Activated CD4-positive, alpha-beta T cell treated with anti-CD3 and anti-CD28 coated beads, Interleukin-2, amount 10 ng/mL, durations not matched to agents 24 days and 14 days (primary cell): ENCODE measurements at regions of chr19 and their contacts with region 1.

Region 1: DNA sequence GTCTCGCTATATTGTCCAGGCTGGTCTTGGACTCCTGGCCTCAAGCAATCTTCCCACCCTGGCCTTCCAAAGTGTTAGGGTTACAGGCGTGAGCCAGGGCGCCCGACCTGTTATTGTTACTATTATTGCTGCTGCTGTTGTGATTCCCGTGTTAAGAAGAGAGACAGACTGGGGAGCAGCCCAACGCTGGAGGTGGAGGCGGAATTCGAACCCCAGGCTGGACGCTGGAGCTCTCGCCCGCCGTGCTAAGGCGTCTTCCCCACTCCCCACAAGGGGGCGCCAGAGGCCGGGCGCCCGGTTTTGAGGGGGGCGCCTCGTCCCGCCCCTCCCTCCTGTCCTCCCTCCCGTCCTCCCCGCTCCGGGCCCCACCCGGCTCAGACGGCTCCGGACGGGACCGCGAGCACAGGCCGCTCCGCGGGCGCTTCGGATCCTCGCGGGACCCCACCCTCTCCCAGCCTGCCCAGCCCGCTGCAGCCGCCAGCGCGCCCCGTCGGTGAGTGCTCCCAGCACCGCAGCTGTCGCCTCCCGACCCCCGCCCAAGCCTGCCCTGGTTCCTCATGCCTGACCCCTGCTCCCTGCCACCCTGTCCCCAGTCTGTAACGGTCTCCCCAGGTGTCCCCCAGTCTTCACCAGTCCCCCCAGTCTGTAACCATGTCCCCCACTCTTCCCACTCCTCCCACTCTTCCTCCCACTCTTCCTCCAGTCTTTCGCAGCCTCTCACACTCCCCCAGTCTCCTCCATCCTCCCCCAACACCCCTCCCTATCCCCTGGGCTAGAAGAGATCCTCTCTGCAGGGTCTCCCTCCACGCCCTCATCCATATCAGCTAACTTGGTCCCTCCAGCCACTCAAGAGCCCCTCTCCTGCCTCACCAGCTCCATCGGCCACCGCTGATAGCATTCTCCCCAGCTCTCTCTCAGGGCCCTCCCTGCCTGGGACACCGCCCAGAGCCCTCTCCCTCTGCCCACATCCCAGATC is at the start of gene EHD2:
- DNase-seq: peak; percentile 85
- H3K4me3 Mint-ChIP-seq: peak within 1 kb of the TSS; percentile 56
- H3K27ac Mint-ChIP-seq: peak within 1 kb of the TSS; percentile 8
- H3K4me1 Mint-ChIP-seq: peaks cover 2% of the 10 kb centered on the region
- H3K27me3 Mint-ChIP-seq: peaks cover 23% of the 10 kb centered on the region
- total RNA-seq, gene EHD2: 0.49 and 1.2 TPM in 2 replicates

Region 2: GRCh38 chr19:47742634-47743033 is 29.3 kb after region 1 on chr19:
- intact Hi-C with region 1: loop called (anchors 1 kb)
- DNase-seq: no peak
- H3K4me3 Mint-ChIP-seq: peak overlapping the region; percentile 91
- H3K27ac Mint-ChIP-seq: peak overlapping the region; percentile 94
- H3K4me1 Mint-ChIP-seq: peaks cover 20% of the 10 kb centered on the region
- H3K27me3 Mint-ChIP-seq: peaks cover 2% of the 10 kb centered on the region

Region 3: GRCh38 chr19:47790398-47790814 is 77.1 kb after region 1 on chr19:
- intact Hi-C with region 1: loop called (anchors 1 kb)
- DNase-seq: peak; percentile 94
- H3K4me3 Mint-ChIP-seq: no peak overlapping the region
- H3K27ac Mint-ChIP-seq: no peak overlapping the region
- H3K4me1 Mint-ChIP-seq: peaks cover 6% of the 10 kb centered on the region
- H3K27me3 Mint-ChIP-seq: no peaks in the 10 kb centered on the region

Region 4: DNA sequence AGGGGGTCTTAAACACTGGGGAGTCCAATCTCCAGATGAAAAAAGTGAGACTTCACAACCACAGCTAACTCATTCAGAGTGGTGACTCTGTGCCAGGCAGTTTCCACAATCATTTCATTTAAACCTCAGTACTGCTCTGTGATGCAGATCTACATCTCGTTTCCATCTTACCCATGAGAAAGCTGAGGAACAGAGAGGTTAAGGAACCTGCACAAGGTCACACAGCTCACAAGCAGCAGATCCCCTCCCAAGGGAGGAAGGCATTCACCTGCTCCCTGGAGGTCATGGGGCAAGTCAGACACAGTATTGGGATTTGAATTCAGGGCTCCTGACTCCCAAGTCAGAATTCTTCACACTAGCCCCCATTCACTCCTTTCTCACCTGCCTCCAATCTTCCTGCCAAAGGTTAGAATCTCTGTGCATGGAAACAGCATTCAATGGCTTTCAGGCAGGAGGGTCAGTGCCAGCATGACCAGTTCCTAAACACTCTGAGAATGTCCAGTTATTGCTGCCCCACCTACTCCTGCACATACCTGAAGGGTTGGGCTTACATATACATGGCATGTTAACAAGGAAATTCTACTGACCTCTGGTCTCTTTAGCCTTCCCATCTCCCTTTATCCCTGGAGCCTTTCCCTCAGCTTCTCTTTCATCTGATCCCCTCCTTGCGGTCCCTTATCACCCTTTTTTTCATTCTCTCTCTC is 328.7 kb after region 1 on chr19:
- intact Hi-C with region 1: no loop called
- DNase-seq: no peak
- H3K4me3 Mint-ChIP-seq: no peak overlapping the region
- H3K27ac Mint-ChIP-seq: no peak overlapping the region
- H3K4me1 Mint-ChIP-seq: no peaks in the 10 kb centered on the region
- H3K27me3 Mint-ChIP-seq: peaks cover 3% of the 10 kb centered on the region